BJ (cell line): ENCODE measurements at regions of chr9 and their contacts with region 1.

Region 1: DNA sequence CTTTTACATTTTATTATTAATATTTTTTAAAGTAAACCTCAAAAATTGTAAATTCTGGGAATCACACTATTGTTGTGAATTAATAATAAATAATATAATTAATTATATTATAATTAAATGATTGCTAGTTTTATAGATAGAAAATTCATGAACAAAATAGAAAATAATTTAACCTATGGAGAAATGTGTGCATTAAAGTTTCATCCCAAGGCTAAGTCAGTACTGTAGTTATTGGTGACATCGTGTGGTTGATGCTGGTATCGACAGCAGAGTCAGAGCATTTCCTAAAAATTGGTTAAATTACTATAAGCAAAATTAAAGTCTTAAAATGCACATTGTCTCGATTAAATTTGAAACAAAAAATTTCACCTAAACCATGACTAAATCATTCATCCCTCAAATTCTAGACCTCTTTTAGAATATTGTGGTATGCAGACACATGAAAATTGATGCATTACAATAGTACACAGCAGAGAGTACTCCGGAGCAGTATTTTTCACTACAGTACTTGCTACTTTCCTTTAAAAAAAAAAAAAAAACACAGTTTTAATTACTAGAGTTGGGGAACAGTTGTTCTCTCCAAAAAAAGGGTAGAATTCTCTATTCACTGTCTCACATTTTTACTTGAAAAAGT is 73.9 kb downstream of the RORB start:
- DNase-seq: no peak
- H3K4me3 ChIP-seq: no peak overlapping the region
- H3K27me3 ChIP-seq: no peaks in the 10 kb centered on the region
- CTCF ChIP-seq: peak; percentile 73

Region 2: GRCh38 chr9:73200694-73201452 is 1370.1 kb before region 1 on chr9:
- CTCF ChIA-PET with region 1: interaction called, 14 read pairs
- POLR2A ChIA-PET with region 1: no interaction called
- DNase-seq: no peak
- H3K4me3 ChIP-seq: no peak overlapping the region
- H3K27me3 ChIP-seq: no peaks in the 10 kb centered on the region; the same call in 1 of the 2 replicates
- CTCF ChIP-seq: peak; percentile 47

Region 3: GRCh38 chr9:74598874-74599273 is 27.9 kb after region 1 on chr9:
- CTCF ChIA-PET with region 1: no interaction called
- POLR2A ChIA-PET with region 1: interaction called, 13 read pairs
- DNase-seq: no peak
- H3K4me3 ChIP-seq: no peak overlapping the region
- H3K27me3 ChIP-seq: no peaks in the 10 kb centered on the region
- CTCF ChIP-seq: no peak

Region 4: DNA sequence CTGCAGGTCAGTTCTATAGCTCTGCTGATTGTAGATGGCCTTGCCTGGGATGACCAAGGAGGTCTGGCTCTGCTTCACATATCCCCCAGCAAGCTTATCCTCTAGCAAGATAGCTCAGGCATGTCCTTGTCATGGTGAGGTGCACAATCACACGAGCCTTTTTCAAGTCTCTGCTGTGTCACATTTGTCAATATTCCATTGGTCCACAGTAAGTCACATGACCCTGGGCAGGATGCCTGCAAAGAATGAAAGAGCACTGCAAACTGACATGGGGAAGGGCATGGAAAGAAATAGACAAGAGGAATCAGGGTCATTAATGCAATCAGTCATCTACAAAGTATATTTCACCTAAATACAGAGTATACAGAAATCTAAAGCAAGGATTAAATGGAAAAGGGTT is 68.1 kb after region 1 on chr9:
- CTCF ChIA-PET with region 1: no interaction called
- POLR2A ChIA-PET with region 1: no interaction called
- DNase-seq: no peak
- H3K4me3 ChIP-seq: no peak overlapping the region
- H3K27me3 ChIP-seq: no peaks in the 10 kb centered on the region
- CTCF ChIP-seq: no peak